Natural killer cell (primary cell): ENCODE measurements at regions of chr5 and their contacts with region 1.

Region 1: DNA sequence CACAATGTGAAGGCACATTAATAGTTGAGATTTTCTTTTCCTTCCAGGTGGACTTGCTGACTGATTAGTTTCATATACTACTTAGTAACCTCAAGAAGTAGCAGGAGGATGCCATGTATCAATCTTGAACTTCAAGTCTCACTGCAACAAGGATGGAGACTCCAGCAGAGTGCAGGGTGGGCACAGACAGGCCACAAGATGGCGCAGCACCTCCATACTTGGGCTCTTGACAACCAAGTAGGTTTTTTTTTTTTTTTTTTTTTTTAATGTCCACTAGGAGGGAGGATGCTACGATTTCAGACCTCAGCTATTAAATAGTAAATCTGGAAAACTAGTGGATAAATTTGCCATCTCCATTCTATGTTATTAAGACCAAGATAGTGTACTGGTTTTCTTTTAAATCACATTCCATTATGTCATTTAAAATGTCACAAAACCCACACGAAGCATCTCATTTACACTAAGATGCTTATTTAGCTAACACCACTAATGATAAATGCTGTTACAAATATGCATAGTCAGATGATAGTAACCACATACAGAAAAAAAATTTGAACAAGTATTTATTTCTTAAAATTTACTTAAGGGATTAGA is 58.6 kb downstream of the IL6ST start:
- DNase-seq: peak; percentile 68 to 89
- ATAC-seq: peak; percentile 86 to 93 (median 86)
- H3K4me3 ChIP-seq: no peak overlapping the region
- H3K4me3 Mint-ChIP-seq: no peak overlapping the region
- H3K27ac ChIP-seq: no peak overlapping the region
- H3K27ac Mint-ChIP-seq: no peak overlapping the region
- H3K4me1 ChIP-seq: no peaks in the 10 kb centered on the region
- H3K4me1 Mint-ChIP-seq: no peaks in the 10 kb centered on the region
- H3K27me3 ChIP-seq: no peaks in the 10 kb centered on the region
- H3K27me3 Mint-ChIP-seq: no peaks in the 10 kb centered on the region
- CTCF ChIP-seq: peak; percentile 95

Region 2: DNA sequence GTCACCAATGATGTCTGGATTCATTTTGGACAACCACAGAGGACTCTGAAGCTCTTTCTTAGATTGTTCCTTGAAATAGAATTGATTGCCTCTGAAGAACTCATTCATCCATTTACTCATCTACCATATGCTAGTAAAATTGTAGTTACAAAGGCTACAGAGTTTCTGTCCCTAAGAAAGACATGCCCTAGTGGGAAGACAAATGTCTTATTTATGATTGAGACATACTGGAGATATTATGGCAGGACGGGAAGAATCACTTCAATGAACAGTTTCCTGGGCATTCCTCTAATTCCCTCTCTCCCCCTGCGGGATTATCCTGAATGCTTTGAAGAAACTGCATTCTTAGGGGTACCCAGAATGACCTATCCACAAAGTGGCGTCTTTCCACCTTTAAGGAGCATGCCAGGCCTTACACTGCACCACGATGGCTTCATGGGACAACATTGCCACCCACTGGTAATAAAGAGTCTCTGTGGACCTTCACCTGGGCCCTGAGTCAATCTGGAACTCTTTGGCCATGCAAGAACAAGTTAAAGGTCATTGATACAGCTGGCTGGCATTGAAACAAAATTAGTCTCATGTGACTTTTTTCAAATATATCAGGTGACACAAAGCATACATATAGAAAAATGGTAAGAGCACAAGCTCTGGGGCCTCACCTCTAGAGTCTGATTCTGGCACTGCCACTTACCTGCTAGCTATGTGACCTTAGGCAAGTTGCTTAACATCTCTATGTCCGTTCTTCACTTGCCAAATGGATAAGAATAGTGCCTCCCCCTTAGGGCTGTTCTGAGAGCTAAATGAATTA is 264.9 kb after region 1 on chr5:
- intact Hi-C with region 1: loop called (anchors 2 kb)
- DNase-seq: peak in 1 of 2 donors; percentile 85
- ATAC-seq: peak in 1 of 3 donors; percentile 58
- H3K4me3 ChIP-seq: no peak overlapping the region
- H3K4me3 Mint-ChIP-seq: no peak overlapping the region
- H3K27ac ChIP-seq: no peak overlapping the region
- H3K27ac Mint-ChIP-seq: no peak overlapping the region
- H3K4me1 ChIP-seq: no peaks in the 10 kb centered on the region
- H3K4me1 Mint-ChIP-seq: peaks cover 0 to 3% of the 10 kb centered on the region in 2 donors
- H3K27me3 ChIP-seq: no peaks in the 10 kb centered on the region
- H3K27me3 Mint-ChIP-seq: no peaks in the 10 kb centered on the region
- CTCF ChIP-seq: no peak

Region 3: DNA sequence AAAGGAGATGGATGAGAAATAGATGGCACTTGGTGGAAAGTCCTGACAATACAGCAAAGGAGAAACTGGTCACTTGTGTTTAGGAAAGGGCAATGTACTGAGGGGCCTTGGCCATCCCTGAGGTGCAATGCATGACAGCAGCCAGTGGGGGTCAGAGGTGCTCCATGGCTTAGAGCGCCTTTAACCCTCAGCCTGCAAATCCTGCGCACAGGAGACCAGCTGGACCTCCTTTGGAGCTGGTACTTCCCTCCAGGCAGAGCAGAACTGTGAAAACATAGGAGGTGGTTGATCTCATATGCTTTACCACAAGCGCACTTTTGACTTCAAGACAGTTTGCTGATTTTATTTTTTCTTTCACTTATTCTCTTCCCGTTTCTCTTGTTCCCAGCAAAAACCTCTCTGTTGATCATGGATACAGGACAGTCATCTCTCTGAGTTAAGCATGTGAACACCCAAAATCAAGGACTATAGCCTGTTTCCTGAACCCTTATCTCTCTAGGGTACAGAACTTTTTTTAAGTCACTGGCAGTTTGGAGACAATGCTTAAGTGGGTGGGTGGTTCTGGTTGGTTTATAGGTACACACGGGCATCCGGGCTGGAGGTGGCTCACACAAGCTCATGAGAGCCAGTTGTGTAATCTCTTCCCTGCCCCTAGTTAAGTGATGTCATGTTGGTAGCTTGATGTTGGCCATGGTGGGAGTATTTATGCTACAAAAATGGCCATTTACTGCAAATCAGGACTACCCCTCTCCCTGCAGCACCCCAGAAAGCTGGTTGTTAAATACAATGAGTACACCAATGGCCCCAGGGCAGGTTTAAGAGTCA is 334.6 kb after region 1 on chr5:
- intact Hi-C with region 1: loop called (anchors 5 kb)
- DNase-seq: peak; percentile 45 to 86
- ATAC-seq: peak; percentile 93 to 99 (median 98)
- H3K4me3 ChIP-seq: no peak overlapping the region
- H3K4me3 Mint-ChIP-seq: no peak overlapping the region
- H3K27ac ChIP-seq: no peak overlapping the region
- H3K27ac Mint-ChIP-seq: no peak overlapping the region
- H3K4me1 ChIP-seq: no peaks in the 10 kb centered on the region
- H3K4me1 Mint-ChIP-seq: no peaks in the 10 kb centered on the region
- H3K27me3 ChIP-seq: no peaks in the 10 kb centered on the region
- H3K27me3 Mint-ChIP-seq: peaks cover 7 to 19% of the 10 kb centered on the region in 2 donors
- CTCF ChIP-seq: peak; percentile 72

Region 4: GRCh38 chr5:56314529-56314928 is 378.3 kb after region 1 on chr5:
- intact Hi-C with region 1: loop called (anchors 10 kb)
- DNase-seq: peak; percentile 33 to 37
- ATAC-seq: no peak
- H3K4me3 ChIP-seq: no peak overlapping the region
- H3K4me3 Mint-ChIP-seq: no peak overlapping the region
- H3K27ac ChIP-seq: no peak overlapping the region
- H3K27ac Mint-ChIP-seq: no peak overlapping the region
- H3K4me1 ChIP-seq: no peaks in the 10 kb centered on the region
- H3K4me1 Mint-ChIP-seq: no peaks in the 10 kb centered on the region
- H3K27me3 ChIP-seq: no peaks in the 10 kb centered on the region
- H3K27me3 Mint-ChIP-seq: peaks cover 0 to 6% of the 10 kb centered on the region in 2 donors
- CTCF ChIP-seq: peak; percentile 64

Region 5: DNA sequence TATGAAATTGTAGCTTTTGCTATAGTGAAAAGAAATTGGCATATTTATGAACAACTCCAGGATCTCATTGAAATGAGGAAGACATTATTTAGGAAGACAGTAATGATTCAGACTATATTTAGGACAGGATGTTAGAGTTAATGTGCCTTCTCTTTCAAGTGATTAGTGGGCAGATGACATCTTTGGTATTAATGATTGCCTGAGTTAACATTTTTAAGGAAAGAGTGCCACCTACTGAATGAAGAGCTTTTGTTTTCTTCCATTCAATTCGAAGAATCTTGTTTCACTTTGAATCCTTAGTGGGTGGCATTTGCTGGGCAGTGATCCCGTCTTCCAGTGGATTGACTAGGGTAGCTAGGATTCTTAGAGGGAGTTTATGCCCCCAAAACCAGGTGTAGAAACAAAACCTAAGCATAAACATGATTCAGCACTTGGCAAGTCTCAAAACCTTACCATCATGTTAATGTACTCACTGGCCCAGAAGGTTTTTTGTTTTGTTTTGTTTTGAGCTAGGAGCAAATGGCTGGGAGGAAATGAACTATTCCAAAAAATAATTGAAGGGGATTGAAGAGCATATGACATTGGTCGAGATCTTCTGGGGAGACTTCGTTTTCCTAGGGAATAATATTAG is 902.3 kb after region 1 on chr5:
- intact Hi-C with region 1: loop called (anchors 1 kb)
- DNase-seq: peak in 1 of 2 donors; percentile 77
- ATAC-seq: peak; percentile 76 to 84 (median 76)
- H3K4me3 ChIP-seq: no peak overlapping the region
- H3K4me3 Mint-ChIP-seq: peak overlapping the region; percentile 14
- H3K27ac ChIP-seq: peak overlapping the region; percentile 41
- H3K27ac Mint-ChIP-seq: peak overlapping the region; percentile 88 to 91
- H3K4me1 ChIP-seq: peaks cover 10% of the 10 kb centered on the region
- H3K4me1 Mint-ChIP-seq: peaks cover 71 to 89% of the 10 kb centered on the region in 2 donors
- H3K27me3 ChIP-seq: no peaks in the 10 kb centered on the region
- H3K27me3 Mint-ChIP-seq: no peaks in the 10 kb centered on the region
- CTCF ChIP-seq: peak; percentile 63